Activated CD4-positive, alpha-beta memory T cell treated with anti-CD3 and anti-CD28 coated beads, Interleukin-2, amount 10 ng/mL, durations not matched to agents 7 days and 5 days (primary cell): ENCODE measurements at regions of chr19 and their contacts with region 1.

Region 1: DNA sequence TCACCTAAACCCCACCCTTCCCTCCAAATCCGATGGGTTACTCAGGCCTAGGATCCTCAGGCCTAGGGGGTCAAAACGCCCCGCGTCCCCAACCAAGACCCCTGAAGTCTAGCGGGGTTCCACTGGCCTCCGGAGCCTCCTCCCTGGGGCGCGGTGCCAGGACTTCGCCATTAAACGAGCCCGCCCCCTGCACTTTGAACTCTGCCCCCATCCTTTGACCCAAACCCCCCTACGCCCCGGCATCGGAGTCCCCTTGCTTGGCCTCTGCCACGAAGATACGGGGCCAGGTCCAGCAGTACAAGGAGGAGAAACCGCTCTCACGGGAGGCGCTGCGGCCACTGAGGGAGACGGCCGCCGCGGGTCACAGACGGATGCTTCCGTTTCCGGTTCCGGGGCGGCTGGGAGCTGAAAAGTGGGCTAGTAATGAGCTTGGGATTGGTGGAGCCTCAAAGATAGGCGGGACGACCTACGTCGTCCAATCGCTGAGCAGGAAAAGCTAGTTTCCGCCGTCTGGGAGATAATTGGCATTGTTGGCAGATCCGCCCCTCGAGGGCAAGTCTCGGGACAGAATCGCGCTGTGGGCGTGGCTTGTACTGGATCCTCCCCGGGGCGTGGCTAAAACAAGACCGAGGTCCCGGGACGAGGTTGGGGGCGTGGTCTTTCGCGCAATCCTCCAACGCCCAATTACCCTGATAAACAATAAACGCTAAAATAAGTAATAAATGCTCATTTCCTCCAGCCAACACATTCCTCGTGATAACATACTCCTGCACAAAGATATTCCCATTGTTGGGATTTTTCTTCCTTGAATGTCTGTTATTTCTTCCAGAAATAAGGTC is 5.7 kb upstream of the ZNF77 start:
- DNase-seq: peak; percentile 100
- H3K4me3 Mint-ChIP-seq: peak overlapping the region; percentile 94
- H3K27ac Mint-ChIP-seq: peak overlapping the region; percentile 91
- H3K4me1 Mint-ChIP-seq: peaks cover 37% of the 10 kb centered on the region
- H3K27me3 Mint-ChIP-seq: no peaks in the 10 kb centered on the region

Region 2: GRCh38 chr19:2648528-2648937 is 302.0 kb before region 1 on chr19:
- CTCF ChIA-PET with region 1: interaction called, 20 read pairs
- POLR2A ChIA-PET with region 1: no interaction called
- DNase-seq: peak; percentile 76
- H3K4me3 Mint-ChIP-seq: no peak overlapping the region
- H3K27ac Mint-ChIP-seq: no peak overlapping the region
- H3K4me1 Mint-ChIP-seq: no peaks in the 10 kb centered on the region
- H3K27me3 Mint-ChIP-seq: peaks cover 5% of the 10 kb centered on the region

Region 3: GRCh38 chr19:2900296-2901252 is 49.9 kb before region 1 on chr19 and contains the start of gene ZNF57:
- CTCF ChIA-PET with region 1: interaction called, 12 read pairs
- POLR2A ChIA-PET with region 1: interaction called, 10 read pairs
- DNase-seq: peak; percentile 97
- H3K4me3 Mint-ChIP-seq: peak within 1 kb of the TSS; percentile 99
- H3K27ac Mint-ChIP-seq: peak within 1 kb of the TSS; percentile 93
- H3K4me1 Mint-ChIP-seq: peaks cover 16% of the 10 kb centered on the region
- H3K27me3 Mint-ChIP-seq: no peaks in the 10 kb centered on the region
- total RNA-seq, gene ZNF57: 3.1 to 3.7 TPM

Region 4: GRCh38 chr19:2977001-2977685 is 26.6 kb after region 1 on chr19 and contains the start of gene TLE6:
- CTCF ChIA-PET with region 1: interaction called, 13 read pairs
- POLR2A ChIA-PET with region 1: interaction called, 3 read pairs
- DNase-seq: peak; percentile 96
- H3K4me3 Mint-ChIP-seq: peak within 1 kb of the TSS; percentile 90
- H3K27ac Mint-ChIP-seq: peak within 1 kb of the TSS; percentile 74
- H3K4me1 Mint-ChIP-seq: peaks cover 21% of the 10 kb centered on the region
- H3K27me3 Mint-ChIP-seq: peaks cover 9% of the 10 kb centered on the region
- total RNA-seq, gene TLE6: 1.1 to 2.0 TPM

Region 5: GRCh38 chr19:3108775-3109174 is 158.3 kb after region 1 on chr19:
- CTCF ChIA-PET with region 1: interaction called, 52 read pairs
- POLR2A ChIA-PET with region 1: no interaction called
- DNase-seq: peak; percentile 76
- H3K4me3 Mint-ChIP-seq: no peak overlapping the region
- H3K27ac Mint-ChIP-seq: no peak overlapping the region
- H3K4me1 Mint-ChIP-seq: peaks cover 8% of the 10 kb centered on the region
- H3K27me3 Mint-ChIP-seq: peaks cover 3% of the 10 kb centered on the region

Region 6: GRCh38 chr19:3132971-3133792 is 182.7 kb after region 1 on chr19:
- CTCF ChIA-PET with region 1: interaction called, 22 read pairs
- POLR2A ChIA-PET with region 1: interaction called, 5 read pairs
- DNase-seq: peak; percentile 92
- H3K4me3 Mint-ChIP-seq: peak overlapping the region; percentile 67
- H3K27ac Mint-ChIP-seq: peak overlapping the region; percentile 98
- H3K4me1 Mint-ChIP-seq: peaks cover 61% of the 10 kb centered on the region
- H3K27me3 Mint-ChIP-seq: no peaks in the 10 kb centered on the region